CD8-positive, alpha-beta T cell (primary cell): ENCODE measurements at regions of chr2 and their contacts with region 1.

Region 1: DNA sequence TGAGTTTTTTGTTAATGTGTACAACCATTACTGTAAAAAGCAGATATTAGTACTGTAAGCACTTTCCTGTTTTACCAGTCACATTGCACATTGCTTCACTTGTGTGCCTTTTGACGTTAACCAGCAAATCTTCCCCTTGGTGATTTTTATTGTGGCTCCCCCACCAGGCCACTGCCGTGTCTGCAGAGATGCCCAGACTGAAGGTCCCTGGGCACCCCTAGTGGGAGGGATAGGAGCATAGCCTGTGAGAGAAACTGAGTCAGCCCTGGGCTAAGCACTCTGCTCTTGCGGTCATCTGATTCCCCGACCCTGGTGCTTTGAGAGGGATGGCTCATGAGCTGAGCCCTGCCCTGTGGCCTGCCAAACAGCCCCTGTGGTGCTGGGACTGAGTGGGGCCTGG is 73.4 kb downstream of the INPP4A start:
- DNase-seq: peak; percentile 20 to 80 (median 64)
- ATAC-seq: peak; percentile 76
- H3K4me3 ChIP-seq: no peak overlapping the region
- H3K4me3 Mint-ChIP-seq: no peak overlapping the region
- H3K27ac ChIP-seq: no peak overlapping the region
- H3K27ac Mint-ChIP-seq: peak overlapping the region; percentile 65
- H3K4me1 ChIP-seq: peaks cover 40% of the 10 kb centered on the region
- H3K4me1 Mint-ChIP-seq: peaks cover 55% of the 10 kb centered on the region
- H3K27me3 ChIP-seq: no peaks in the 10 kb centered on the region
- H3K27me3 Mint-ChIP-seq: no peaks in the 10 kb centered on the region
- CTCF ChIP-seq: peak; percentile 81

Region 2: DNA sequence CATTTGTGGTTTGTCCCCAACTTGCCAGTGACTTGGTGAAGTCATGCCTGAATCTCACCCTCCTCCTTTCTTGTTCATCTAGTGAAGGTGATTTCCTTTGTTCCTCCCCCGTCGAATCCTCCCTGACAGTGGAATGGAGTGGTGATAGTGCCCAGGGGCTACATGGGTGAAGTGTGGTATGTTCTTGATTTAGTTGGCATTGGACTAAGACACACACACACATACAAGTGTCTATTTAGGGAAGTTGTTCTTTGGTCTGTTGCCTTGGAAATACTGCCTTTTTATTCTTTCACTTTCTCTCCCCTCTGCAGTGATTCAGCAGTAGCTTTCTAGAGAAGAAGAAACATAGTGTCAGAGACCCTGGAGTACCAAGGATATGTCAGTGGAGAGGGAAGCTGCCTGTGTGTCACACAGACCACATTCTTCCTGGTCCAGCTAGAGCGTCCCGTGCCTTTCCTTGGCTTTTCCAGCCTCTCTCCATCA is 62.6 kb before region 1 on chr2:
- CTCF ChIA-PET with region 1: interaction called, 14 read pairs
- POLR2A ChIA-PET with region 1: no interaction called
- intact Hi-C with region 1: no loop called
- DNase-seq: peak in 4 of 9 experiments; percentile 39 to 84 (median 60)
- ATAC-seq: peak; percentile 56
- H3K4me3 ChIP-seq: no peak overlapping the region
- H3K4me3 Mint-ChIP-seq: peak overlapping the region; percentile 56
- H3K27ac ChIP-seq: peak overlapping the region; percentile 63 to 76
- H3K27ac Mint-ChIP-seq: peak overlapping the region; percentile 92
- H3K4me1 ChIP-seq: peaks cover 98% of the 10 kb centered on the region
- H3K4me1 Mint-ChIP-seq: peaks cover 94% of the 10 kb centered on the region
- H3K27me3 ChIP-seq: no peaks in the 10 kb centered on the region
- H3K27me3 Mint-ChIP-seq: no peaks in the 10 kb centered on the region
- CTCF ChIP-seq: no peak

Region 3: GRCh38 chr2:98479959-98480524 is 38.0 kb before region 1 on chr2:
- CTCF ChIA-PET with region 1: interaction called, 4 read pairs
- POLR2A ChIA-PET with region 1: no interaction called
- intact Hi-C with region 1: loop called in 1 of 2 experiments (anchors 5 kb)
- DNase-seq: peak in 4 of 9 experiments; percentile 55 to 63 (median 58)
- ATAC-seq: peak; percentile 72
- H3K4me3 ChIP-seq: no peak overlapping the region
- H3K4me3 Mint-ChIP-seq: peak overlapping the region; percentile 53
- H3K27ac ChIP-seq: peak overlapping the region; percentile 29 to 68
- H3K27ac Mint-ChIP-seq: peak overlapping the region; percentile 89
- H3K4me1 ChIP-seq: peaks cover 99% of the 10 kb centered on the region
- H3K4me1 Mint-ChIP-seq: peaks cover 98% of the 10 kb centered on the region
- H3K27me3 ChIP-seq: no peaks in the 10 kb centered on the region
- H3K27me3 Mint-ChIP-seq: no peaks in the 10 kb centered on the region
- CTCF ChIP-seq: no peak

Region 4: GRCh38 chr2:98736464-98736889 is 218.4 kb after region 1 on chr2:
- CTCF ChIA-PET with region 1: no interaction called
- POLR2A ChIA-PET with region 1: no interaction called
- intact Hi-C with region 1: no loop called
- DNase-seq: peak in 2 of 9 experiments; percentile 32 to 49
- ATAC-seq: peak; percentile 58
- H3K4me3 ChIP-seq: no peak overlapping the region
- H3K4me3 Mint-ChIP-seq: peak overlapping the region; percentile 22
- H3K27ac ChIP-seq: peak overlapping the region in 1 of 2 experiments; percentile 39
- H3K27ac Mint-ChIP-seq: peak overlapping the region; percentile 82
- H3K4me1 ChIP-seq: peaks cover 63% of the 10 kb centered on the region
- H3K4me1 Mint-ChIP-seq: peaks cover 76% of the 10 kb centered on the region
- H3K27me3 ChIP-seq: no peaks in the 10 kb centered on the region
- H3K27me3 Mint-ChIP-seq: no peaks in the 10 kb centered on the region
- CTCF ChIP-seq: no peak